ENCODE measurements at regions of chr16 and their contacts with region 1.

Region 1: GRCh38 chr16:85728879-85729278 is 22.0 kb downstream of the C16orf74 start:
- DNase-seq: no peak
- ATAC-seq: no peak
- H3K4me3 ChIP-seq: no peak overlapping the region
- H3K27ac ChIP-seq: no peak overlapping the region
- H3K4me1 ChIP-seq: peaks cover 0 to 22% (median 0%) of the 10 kb centered on the region in 9 donors
- H3K27me3 ChIP-seq: peaks cover 0 to 3% (median 0%) of the 10 kb centered on the region in 7 donors
- CTCF ChIP-seq: peak in 1 of 9 donors; percentile 15

Region 2: GRCh38 chr16:85253084-85253941 is 475.6 kb before region 1 on chr16:
- intact Hi-C with region 1: loop called in 1 of 10 experiments (anchors 10 kb)
- DNase-seq: peak; percentile 34 to 66
- ATAC-seq: peak; percentile 48 to 85 (median 69)
- H3K4me3 ChIP-seq: no peak overlapping the region
- H3K27ac ChIP-seq: no peak overlapping the region
- H3K4me1 ChIP-seq: peaks cover 0 to 8% (median 0%) of the 10 kb centered on the region in 9 donors
- H3K27me3 ChIP-seq: peaks cover 0 to 8% (median 0%) of the 10 kb centered on the region in 7 donors
- CTCF ChIP-seq: peak; percentile 84 to 95 (median 92)

Region 3: DNA sequence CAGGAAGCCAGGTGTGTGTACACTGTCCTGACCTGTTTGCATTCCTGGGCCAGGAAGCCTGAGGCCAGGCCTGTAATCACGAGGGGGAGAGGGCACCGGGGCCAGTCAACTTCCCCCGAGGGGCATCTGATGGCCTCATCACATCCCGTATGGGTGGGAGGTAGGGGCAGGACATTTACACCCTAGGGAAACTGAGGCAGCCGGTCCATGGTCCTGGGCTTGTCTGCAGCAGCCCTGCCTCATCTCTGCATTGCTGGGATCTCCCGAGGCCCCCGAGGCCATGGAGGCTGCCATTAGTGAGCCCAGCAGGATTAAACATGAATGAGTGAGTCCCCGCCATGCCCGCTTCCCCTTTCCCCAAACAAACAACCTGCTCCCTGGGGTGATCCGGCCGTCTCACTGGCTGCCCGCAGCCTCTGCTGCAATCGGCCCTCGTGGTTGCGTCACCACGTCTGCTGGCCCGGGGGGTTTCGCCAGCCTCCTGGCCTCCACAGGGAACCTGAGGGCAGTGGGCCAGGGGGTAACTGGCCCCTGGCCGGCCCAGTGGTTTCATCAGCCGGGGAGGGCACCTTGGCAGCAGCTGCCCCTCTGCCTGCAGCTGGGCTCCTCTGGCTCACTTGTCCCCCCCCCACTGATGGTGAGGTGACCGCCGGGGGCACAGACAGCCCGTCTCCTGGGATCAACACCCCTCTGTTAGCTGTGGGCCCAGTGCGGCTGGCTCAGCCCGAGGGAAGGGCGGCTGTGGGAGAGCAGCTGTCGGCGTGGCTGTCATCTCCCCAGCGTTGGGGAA is 204.1 kb before region 1 on chr16:
- intact Hi-C with region 1: no loop called
- DNase-seq: peak in 1 of 2 donors; percentile 58
- ATAC-seq: peak in 1 of 8 donors; percentile 3
- H3K4me3 ChIP-seq: no peak overlapping the region
- H3K27ac ChIP-seq: peak overlapping the region in 2 of 10 donors; percentile 44 to 58
- H3K4me1 ChIP-seq: peaks cover 20 to 53% (median 38%) of the 10 kb centered on the region in 9 donors
- H3K27me3 ChIP-seq: no peaks in the 10 kb centered on the region
- CTCF ChIP-seq: no peak